T-cell (primary cell): ENCODE measurements at regions of chr10 and their contacts with region 1.

Region 1: DNA sequence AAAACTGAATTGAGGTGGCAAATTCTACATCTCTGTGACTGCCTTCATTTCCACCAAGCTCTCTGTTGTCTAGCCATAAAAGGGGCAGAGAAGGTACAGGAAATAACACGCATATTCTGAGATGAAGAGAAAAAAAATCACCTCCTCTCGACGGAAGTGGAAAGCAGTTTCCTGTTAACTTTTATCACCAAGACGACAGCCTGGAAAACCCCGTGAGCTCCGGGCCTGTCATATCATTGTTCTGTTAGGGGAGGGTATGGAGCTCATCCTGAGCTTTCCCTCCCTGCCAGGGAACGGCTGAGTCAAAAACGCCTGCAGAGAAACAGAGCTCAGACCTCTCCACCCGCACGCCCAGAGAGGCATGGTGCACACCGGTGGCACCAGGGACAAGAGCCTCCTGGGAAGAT is 200.3 kb downstream of the PRPF18 start:
- DNase-seq: peak; percentile 20 to 94 (median 74)
- ATAC-seq: peak; percentile 86 to 93 (median 93)
- H3K4me3 ChIP-seq: peak overlapping the region; percentile 30 to 34
- H3K4me3 Mint-ChIP-seq: peak overlapping the region; percentile 73 to 81 (median 77)
- H3K27ac ChIP-seq: peak overlapping the region; percentile 97
- H3K27ac Mint-ChIP-seq: no peak overlapping the region
- H3K4me1 ChIP-seq: peaks cover 27 to 50% of the 10 kb centered on the region in 2 experiments
- H3K4me1 Mint-ChIP-seq: peaks cover 11 to 15% (median 12%) of the 10 kb centered on the region in 3 donors
- H3K27me3 ChIP-seq: no peaks in the 10 kb centered on the region
- H3K27me3 Mint-ChIP-seq: no peaks in the 10 kb centered on the region

Region 2: DNA sequence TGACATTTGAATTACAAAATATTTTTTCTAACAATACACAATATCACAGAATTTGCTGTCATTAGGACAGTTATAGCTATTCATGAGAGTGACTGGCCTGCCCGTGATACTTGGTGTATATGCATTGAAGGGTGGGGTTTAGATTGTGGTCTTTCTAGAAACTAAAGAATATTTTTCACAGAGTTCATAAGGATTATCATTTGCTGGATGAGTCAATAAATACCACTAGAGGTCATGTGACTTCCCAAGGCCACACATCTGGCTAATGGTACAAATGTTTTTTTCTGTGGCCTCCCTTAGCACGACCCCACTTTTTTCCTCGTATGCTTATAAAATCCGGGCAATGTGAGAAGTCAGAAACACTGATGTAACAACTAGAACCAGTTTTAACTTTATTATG is 681.8 kb before region 1 on chr10:
- CTCF ChIA-PET with region 1: no interaction called
- POLR2A ChIA-PET with region 1: no interaction called
- DNase-seq: no peak
- ATAC-seq: no peak
- H3K4me3 ChIP-seq: no peak overlapping the region
- H3K4me3 Mint-ChIP-seq: peak overlapping the region in 1 of 3 donors; percentile 41
- H3K27ac ChIP-seq: peak overlapping the region; percentile 35
- H3K27ac Mint-ChIP-seq: peak overlapping the region; percentile 96 to 99
- H3K4me1 ChIP-seq: peaks cover 26 to 70% of the 10 kb centered on the region in 2 experiments
- H3K4me1 Mint-ChIP-seq: peaks cover 72 to 83% (median 82%) of the 10 kb centered on the region in 3 donors
- H3K27me3 ChIP-seq: no peaks in the 10 kb centered on the region
- H3K27me3 Mint-ChIP-seq: no peaks in the 10 kb centered on the region

Region 3: GRCh38 chr10:13765641-13766341 is 21.2 kb before region 1 on chr10:
- CTCF ChIA-PET with region 1: no interaction called
- POLR2A ChIA-PET with region 1: no interaction called
- DNase-seq: no peak
- ATAC-seq: no peak
- H3K4me3 ChIP-seq: no peak overlapping the region
- H3K4me3 Mint-ChIP-seq: no peak overlapping the region
- H3K27ac ChIP-seq: no peak overlapping the region
- H3K27ac Mint-ChIP-seq: no peak overlapping the region
- H3K4me1 ChIP-seq: no peaks in the 10 kb centered on the region
- H3K4me1 Mint-ChIP-seq: no peaks in the 10 kb centered on the region
- H3K27me3 ChIP-seq: peaks cover 0 to 18% of the 10 kb centered on the region in 2 experiments
- H3K27me3 Mint-ChIP-seq: peaks cover 4 to 6% of the 10 kb centered on the region in 2 donors

Region 4: GRCh38 chr10:13776861-13777311 is 10.1 kb before region 1 on chr10:
- CTCF ChIA-PET with region 1: interaction called in 1 of 2 experiments, 13 read pairs
- POLR2A ChIA-PET with region 1: interaction called in 1 of 2 experiments, 15 read pairs
- DNase-seq: no peak
- ATAC-seq: no peak
- H3K4me3 ChIP-seq: no peak overlapping the region
- H3K4me3 Mint-ChIP-seq: no peak overlapping the region
- H3K27ac ChIP-seq: no peak overlapping the region
- H3K27ac Mint-ChIP-seq: no peak overlapping the region
- H3K4me1 ChIP-seq: peaks cover 0 to 3% of the 10 kb centered on the region in 2 experiments
- H3K4me1 Mint-ChIP-seq: peaks cover 0 to 7% (median 4%) of the 10 kb centered on the region in 3 donors
- H3K27me3 ChIP-seq: peaks cover 0 to 20% of the 10 kb centered on the region in 2 experiments
- H3K27me3 Mint-ChIP-seq: peaks cover 15 to 32% of the 10 kb centered on the region in 2 donors

Region 5: DNA sequence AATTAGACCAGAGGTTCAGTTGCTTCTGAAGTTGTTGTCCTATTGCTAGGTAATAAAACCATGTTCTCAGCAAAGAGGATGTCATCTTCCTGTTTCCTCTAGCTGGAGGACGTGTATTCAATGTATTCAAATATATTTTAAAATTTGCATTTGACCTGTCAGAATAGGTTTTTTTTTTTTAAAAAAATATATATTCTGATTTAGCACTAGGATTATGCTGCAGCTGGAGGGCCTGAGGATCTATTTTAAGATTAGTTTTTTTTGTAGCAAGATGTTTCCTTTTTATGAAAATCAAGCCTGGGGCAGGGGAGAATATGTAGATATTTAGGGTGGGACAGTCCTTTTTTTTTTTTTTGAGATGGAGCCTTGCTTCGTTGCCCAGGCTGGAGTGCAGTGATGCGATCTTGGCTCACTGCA is 206.7 kb after region 1 on chr10:
- CTCF ChIA-PET with region 1: interaction called in 1 of 2 experiments, 3 read pairs
- POLR2A ChIA-PET with region 1: interaction called in 1 of 2 experiments, 10 read pairs
- DNase-seq: no peak
- ATAC-seq: peak in 1 of 4 experiments; percentile 38
- H3K4me3 ChIP-seq: no peak overlapping the region
- H3K4me3 Mint-ChIP-seq: no peak overlapping the region
- H3K27ac ChIP-seq: no peak overlapping the region
- H3K27ac Mint-ChIP-seq: no peak overlapping the region
- H3K4me1 ChIP-seq: peaks cover 4 to 6% of the 10 kb centered on the region in 2 experiments
- H3K4me1 Mint-ChIP-seq: peaks cover 12 to 23% (median 17%) of the 10 kb centered on the region in 3 donors
- H3K27me3 ChIP-seq: no peaks in the 10 kb centered on the region
- H3K27me3 Mint-ChIP-seq: no peaks in the 10 kb centered on the region

Region 6: GRCh38 chr10:14093730-14094484 is 306.9 kb after region 1 on chr10:
- CTCF ChIA-PET with region 1: interaction called in 1 of 2 experiments, 10 read pairs
- POLR2A ChIA-PET with region 1: no interaction called
- DNase-seq: peak in 2 of 35 experiments; percentile 3 to 23
- ATAC-seq: peak in 1 of 4 experiments; percentile 12
- H3K4me3 ChIP-seq: no peak overlapping the region
- H3K4me3 Mint-ChIP-seq: no peak overlapping the region
- H3K27ac ChIP-seq: no peak overlapping the region
- H3K27ac Mint-ChIP-seq: no peak overlapping the region
- H3K4me1 ChIP-seq: no peaks in the 10 kb centered on the region
- H3K4me1 Mint-ChIP-seq: peaks cover 0 to 3% (median 0%) of the 10 kb centered on the region in 3 donors
- H3K27me3 ChIP-seq: peaks cover 0 to 1% of the 10 kb centered on the region in 2 experiments
- H3K27me3 Mint-ChIP-seq: no peaks in the 10 kb centered on the region

Region 7: DNA sequence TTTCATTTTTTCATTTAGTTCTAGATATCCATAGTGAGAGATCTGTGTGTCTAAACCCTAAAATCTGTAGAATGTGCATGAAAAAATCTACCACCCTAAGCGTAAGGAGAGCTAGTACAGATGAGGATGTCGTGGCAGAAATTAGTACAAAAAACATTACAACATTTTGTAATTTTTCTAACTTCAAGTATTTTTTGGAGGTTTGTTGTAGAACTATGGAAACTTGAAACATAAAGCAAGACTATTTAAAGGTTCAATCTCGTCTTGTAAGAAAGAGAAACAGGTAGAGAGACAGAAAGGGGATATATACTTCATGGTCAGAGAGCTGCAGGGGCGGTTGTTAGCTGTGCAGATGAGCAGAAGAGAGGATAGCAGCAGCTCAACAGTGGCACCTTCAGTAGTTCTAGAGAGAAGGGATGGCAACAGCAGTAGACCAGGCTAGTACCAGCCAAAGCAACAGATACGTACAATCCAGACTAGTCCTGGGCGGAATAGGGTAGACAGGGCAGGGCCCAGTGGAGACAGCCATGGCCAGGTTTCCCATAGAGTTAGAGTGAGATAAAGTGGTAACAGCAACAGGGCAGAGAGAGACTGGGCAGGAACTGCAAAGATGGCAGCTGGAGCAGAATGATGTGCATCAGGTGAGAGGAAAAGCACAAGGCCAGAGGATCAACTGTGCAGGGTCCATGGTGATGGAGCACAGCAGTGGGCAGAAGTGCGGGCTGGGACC is 398.5 kb after region 1 on chr10:
- CTCF ChIA-PET with region 1: interaction called, 5 to 6 read pairs
- POLR2A ChIA-PET with region 1: interaction called, 5 to 19 read pairs
- DNase-seq: peak in 33 of 35 experiments; percentile 15 to 81 (median 43)
- ATAC-seq: peak; percentile 65 to 82 (median 68)
- H3K4me3 ChIP-seq: peak overlapping the region; percentile 3 to 21
- H3K4me3 Mint-ChIP-seq: peak overlapping the region; percentile 48 to 78 (median 70)
- H3K27ac ChIP-seq: peak overlapping the region; percentile 80
- H3K27ac Mint-ChIP-seq: peak overlapping the region; percentile 87 to 93
- H3K4me1 ChIP-seq: peaks cover 15 to 24% of the 10 kb centered on the region in 2 experiments
- H3K4me1 Mint-ChIP-seq: peaks cover 22 to 27% (median 23%) of the 10 kb centered on the region in 3 donors
- H3K27me3 ChIP-seq: peaks cover 2 to 26% of the 10 kb centered on the region in 2 experiments
- H3K27me3 Mint-ChIP-seq: peaks cover 21 to 22% of the 10 kb centered on the region in 2 donors